Posterior vena cava (tissue), 2 donors: ENCODE measurements at regions of chr22 and their contacts with region 1.

Region 1: GRCh38 chr22:35064664-35065063 is 1.3 kb upstream of the ISX start:
- DNase-seq: no peak

Region 2: GRCh38 chr22:34045311-34045710 is 1019.4 kb before region 1 on chr22:
- intact Hi-C with region 1: loop called in 1 of 2 experiments (anchors 5 kb)
- DNase-seq: no peak

Region 3: DNA sequence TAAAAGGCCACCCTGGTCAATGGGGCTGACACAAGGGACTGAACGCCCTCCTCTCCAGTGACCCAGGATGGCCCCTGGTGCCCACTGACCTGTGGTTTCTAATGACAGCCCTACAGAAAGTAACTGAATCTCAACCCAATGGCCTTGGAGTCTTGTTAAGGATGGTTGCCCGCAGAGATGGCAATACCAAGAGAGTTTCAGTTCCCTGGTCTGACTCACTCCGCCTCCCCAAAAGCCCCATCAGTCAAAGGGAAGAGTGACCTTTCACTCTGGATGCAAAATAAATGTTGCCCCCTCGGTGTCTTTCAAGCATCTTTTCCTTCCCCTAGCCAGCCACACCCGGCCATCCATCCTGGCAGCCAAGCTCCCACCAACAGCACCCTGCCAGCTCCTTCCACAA is 56.5 kb before region 1 on chr22:
- intact Hi-C with region 1: no loop called
- DNase-seq: no peak